B cell (primary cell): ENCODE measurements at regions of chr12 and their contacts with region 1.

Region 1: GRCh38 chr12:47758834-47759690 is at the start of gene RAPGEF3:
- DNase-seq: peak; percentile 78
- ATAC-seq: peak; percentile 77
- H3K4me3 ChIP-seq: peak within 1 kb of the TSS; percentile 15 to 71 (median 67)
- H3K4me3 Mint-ChIP-seq: peak within 1 kb of the TSS; percentile 85
- H3K27ac ChIP-seq: peak within 1 kb of the TSS in 1 of 2 donors; percentile 23
- H3K27ac Mint-ChIP-seq: peak within 1 kb of the TSS; percentile 50
- H3K4me1 ChIP-seq: peaks cover 52 to 66% of the 10 kb centered on the region in 2 donors
- H3K4me1 Mint-ChIP-seq: peaks cover 53% of the 10 kb centered on the region
- H3K27me3 ChIP-seq: no peaks in the 10 kb centered on the region
- H3K27me3 Mint-ChIP-seq: no peaks in the 10 kb centered on the region
- CTCF ChIP-seq: peak; percentile 70
- total RNA-seq, gene RAPGEF3: 5.2 and 5.4 TPM in 2 replicates

Region 2: DNA sequence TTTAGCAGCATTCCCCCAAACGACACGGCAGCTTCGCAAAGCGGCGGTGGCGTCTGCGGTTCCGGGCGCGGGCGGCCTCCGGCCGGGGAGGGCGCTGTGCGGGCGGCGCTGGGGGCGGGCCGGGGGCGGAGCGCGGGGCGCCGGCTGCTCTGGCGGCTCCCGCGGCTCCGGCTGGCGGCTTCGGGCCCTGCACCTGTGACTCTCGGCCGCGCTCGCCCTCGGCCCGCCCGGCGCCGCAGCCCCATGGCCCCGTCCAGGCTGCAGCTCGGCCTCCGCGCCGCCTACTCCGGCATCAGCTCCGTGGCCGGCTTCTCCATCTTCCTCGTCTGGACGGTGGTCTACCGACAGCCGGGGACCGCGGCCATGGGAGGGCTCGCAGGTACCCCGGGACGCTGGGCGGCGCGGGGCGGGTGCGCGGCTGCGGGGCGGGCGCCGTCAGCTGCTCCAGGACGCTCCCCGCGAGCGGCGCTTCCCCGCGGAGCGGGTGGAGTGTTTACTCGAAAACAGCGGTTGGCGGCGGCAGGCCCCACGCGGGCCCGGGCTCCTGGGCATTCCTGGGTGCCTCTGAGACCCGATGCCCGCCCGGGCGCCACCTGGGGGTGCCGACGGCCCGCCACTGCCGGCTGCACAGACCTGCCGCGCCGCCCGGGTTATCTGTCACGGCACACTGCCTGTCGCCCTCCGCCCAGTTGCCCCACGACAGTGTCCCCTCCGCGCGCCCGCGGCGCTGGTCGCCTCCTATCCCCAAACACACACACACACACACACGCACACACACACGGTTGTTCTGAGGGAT is 14.2 kb after region 1 on chr12 and contains the start of gene SLC48A1:
- CTCF ChIA-PET with region 1: interaction called, 205 read pairs
- POLR2A ChIA-PET with region 1: interaction called, 5 read pairs
- intact Hi-C with region 1: loop called (anchors 2 kb)
- DNase-seq: peak; percentile 88
- ATAC-seq: peak; percentile 92
- H3K4me3 ChIP-seq: peak within 1 kb of the TSS in 4 of 5 experiments; percentile 39 to 75 (median 62)
- H3K4me3 Mint-ChIP-seq: peak within 1 kb of the TSS; percentile 93
- H3K27ac ChIP-seq: peak within 1 kb of the TSS; percentile 53 to 54
- H3K27ac Mint-ChIP-seq: peak within 1 kb of the TSS; percentile 86
- H3K4me1 ChIP-seq: peaks cover 6 to 27% of the 10 kb centered on the region in 2 donors
- H3K4me1 Mint-ChIP-seq: peaks cover 24% of the 10 kb centered on the region
- H3K27me3 ChIP-seq: no peaks in the 10 kb centered on the region
- H3K27me3 Mint-ChIP-seq: no peaks in the 10 kb centered on the region
- CTCF ChIP-seq: peak; percentile 36
- total RNA-seq, gene SLC48A1: 20.0 and 25.1 TPM in 2 replicates

Region 3: GRCh38 chr12:47779301-47779942 is 20.4 kb after region 1 on chr12:
- CTCF ChIA-PET with region 1: interaction called, 205 read pairs
- POLR2A ChIA-PET with region 1: no interaction called
- intact Hi-C with region 1: loop called (anchors 1 kb)
- DNase-seq: peak; percentile 90
- ATAC-seq: peak; percentile 90
- H3K4me3 ChIP-seq: no peak overlapping the region
- H3K4me3 Mint-ChIP-seq: no peak overlapping the region
- H3K27ac ChIP-seq: no peak overlapping the region
- H3K27ac Mint-ChIP-seq: peak overlapping the region; percentile 80
- H3K4me1 ChIP-seq: peaks cover 0 to 14% of the 10 kb centered on the region in 2 donors
- H3K4me1 Mint-ChIP-seq: peaks cover 23% of the 10 kb centered on the region
- H3K27me3 ChIP-seq: no peaks in the 10 kb centered on the region
- H3K27me3 Mint-ChIP-seq: no peaks in the 10 kb centered on the region
- CTCF ChIP-seq: peak; percentile 92

Region 4: DNA sequence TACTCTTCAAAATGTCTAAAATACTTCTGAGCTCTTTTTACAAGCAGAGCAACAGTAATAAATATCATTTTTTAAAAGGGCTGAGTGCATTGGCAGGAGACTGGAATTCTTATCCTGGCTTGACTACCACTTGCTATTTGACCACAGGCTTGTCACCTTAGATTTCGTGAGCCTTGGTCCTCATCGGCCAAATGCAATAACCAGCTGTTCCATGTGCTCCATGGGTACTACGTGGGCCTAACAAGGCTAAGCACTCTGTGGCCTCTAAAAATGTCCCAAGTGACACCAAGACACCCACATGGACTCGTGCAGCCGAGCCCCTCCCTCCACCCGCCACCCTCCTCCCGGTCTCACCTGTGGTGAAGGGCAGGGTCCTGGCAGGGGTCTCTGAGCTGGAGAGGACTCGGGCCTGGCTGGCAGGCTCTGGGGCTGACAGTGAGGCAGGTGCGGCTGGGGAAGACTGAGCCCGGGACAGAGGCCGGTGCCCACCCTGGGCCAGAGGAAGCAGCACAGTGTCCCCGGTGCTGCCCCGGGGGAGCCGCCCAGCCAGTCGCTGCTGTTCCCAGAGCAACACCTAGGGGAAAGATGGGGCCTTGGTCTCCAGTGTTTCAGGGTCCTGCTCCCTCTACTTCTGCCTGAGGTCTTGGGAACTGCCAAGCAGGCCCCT is 34.1 kb after region 1 on chr12:
- CTCF ChIA-PET with region 1: no interaction called
- POLR2A ChIA-PET with region 1: no interaction called
- intact Hi-C with region 1: no loop called
- DNase-seq: no peak
- ATAC-seq: no peak
- H3K4me3 ChIP-seq: no peak overlapping the region
- H3K4me3 Mint-ChIP-seq: no peak overlapping the region
- H3K27ac ChIP-seq: peak overlapping the region in 1 of 2 donors; percentile 5
- H3K27ac Mint-ChIP-seq: no peak overlapping the region
- H3K4me1 ChIP-seq: peaks cover 0 to 3% of the 10 kb centered on the region in 2 donors
- H3K4me1 Mint-ChIP-seq: peaks cover 2% of the 10 kb centered on the region
- H3K27me3 ChIP-seq: no peaks in the 10 kb centered on the region
- H3K27me3 Mint-ChIP-seq: no peaks in the 10 kb centered on the region
- CTCF ChIP-seq: no peak

Region 5: GRCh38 chr12:47910981-47911380 is 151.9 kb after region 1 on chr12:
- CTCF ChIA-PET with region 1: no interaction called
- POLR2A ChIA-PET with region 1: no interaction called
- intact Hi-C with region 1: no loop called
- DNase-seq: no peak
- ATAC-seq: no peak
- H3K4me3 ChIP-seq: no peak overlapping the region
- H3K4me3 Mint-ChIP-seq: no peak overlapping the region
- H3K27ac ChIP-seq: no peak overlapping the region
- H3K27ac Mint-ChIP-seq: no peak overlapping the region
- H3K4me1 ChIP-seq: no peaks in the 10 kb centered on the region
- H3K4me1 Mint-ChIP-seq: no peaks in the 10 kb centered on the region
- H3K27me3 ChIP-seq: no peaks in the 10 kb centered on the region
- H3K27me3 Mint-ChIP-seq: peaks cover 27% of the 10 kb centered on the region
- CTCF ChIP-seq: no peak